Right cardiac atrium (tissue), 5 donors: ENCODE measurements at regions of chr1 and their contacts with region 1.

Region 1: DNA sequence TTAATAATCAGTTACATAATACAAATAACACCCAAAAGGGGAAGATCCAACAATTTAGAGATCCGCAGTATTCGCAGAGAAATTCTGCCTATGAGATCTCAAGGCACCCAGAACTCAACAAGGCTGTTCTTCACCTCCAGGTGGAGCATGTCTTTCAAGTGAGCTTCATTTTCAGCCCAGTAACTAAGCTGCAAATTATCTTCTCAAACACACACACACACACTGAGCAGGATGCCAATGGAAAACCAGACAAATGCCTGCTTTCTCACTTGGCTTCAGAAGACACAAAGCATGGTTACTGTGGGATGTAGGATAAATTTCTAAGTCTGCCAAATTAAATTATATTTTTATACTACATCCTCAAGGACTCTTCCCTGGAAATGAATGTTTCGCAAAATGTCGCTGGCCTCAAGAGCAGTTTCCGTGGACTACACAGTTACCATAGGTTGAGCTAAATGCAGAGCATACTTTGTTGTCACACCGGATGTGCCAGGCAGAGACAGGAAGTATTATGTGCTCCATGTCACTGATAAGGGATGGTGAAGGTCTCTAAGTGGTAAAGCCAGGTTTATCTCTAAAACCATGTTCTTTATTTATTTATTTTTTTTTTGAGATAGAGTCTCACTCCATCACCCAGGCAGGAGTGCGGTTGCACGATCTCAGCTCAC is 30.3 kb downstream of the UBR4 start:
- DNase-seq: no peak
- ATAC-seq: peak in 1 of 2 donors; percentile 31
- H3K4me3 ChIP-seq: no peak overlapping the region
- H3K27ac ChIP-seq: no peak overlapping the region
- H3K4me1 ChIP-seq: no peaks in the 10 kb centered on the region
- H3K27me3 ChIP-seq: no peaks in the 10 kb centered on the region

Region 2: DNA sequence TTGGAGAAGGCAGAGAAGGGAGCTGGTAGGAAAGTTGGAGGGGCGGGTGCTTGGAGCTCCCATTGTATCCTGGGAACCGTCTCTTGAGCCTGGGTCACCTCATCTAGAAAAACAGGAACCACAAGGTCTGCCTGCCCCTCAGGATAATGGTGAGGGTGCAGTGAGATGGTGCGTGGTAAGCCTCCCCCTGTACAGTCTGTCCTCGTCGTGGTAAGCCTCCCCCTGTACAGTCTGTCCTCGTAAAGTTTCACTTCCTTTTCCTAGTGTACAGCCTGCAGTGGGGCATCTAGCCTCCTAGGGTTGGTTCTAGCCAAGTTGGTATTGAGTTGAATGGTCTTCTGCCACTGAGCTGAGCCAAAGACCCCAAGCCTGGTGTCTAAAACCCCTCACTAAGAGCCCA is 1138.6 kb before region 1 on chr1:
- intact Hi-C with region 1: no loop called
- DNase-seq: no peak
- ATAC-seq: peak; percentile 29 to 76
- H3K4me3 ChIP-seq: no peak overlapping the region
- H3K27ac ChIP-seq: no peak overlapping the region
- H3K4me1 ChIP-seq: no peaks in the 10 kb centered on the region
- H3K27me3 ChIP-seq: no peaks in the 10 kb centered on the region

Region 3: GRCh38 chr1:19123837-19124236 is 55.9 kb before region 1 on chr1:
- intact Hi-C with region 1: loop called in 2 of 4 experiments (anchors 10 kb)
- DNase-seq: peak in 1 of 3 donors; percentile 28
- ATAC-seq: peak in 1 of 2 donors; percentile 31
- H3K4me3 ChIP-seq: no peak overlapping the region
- H3K27ac ChIP-seq: no peak overlapping the region
- H3K4me1 ChIP-seq: no peaks in the 10 kb centered on the region
- H3K27me3 ChIP-seq: no peaks in the 10 kb centered on the region

Region 4: DNA sequence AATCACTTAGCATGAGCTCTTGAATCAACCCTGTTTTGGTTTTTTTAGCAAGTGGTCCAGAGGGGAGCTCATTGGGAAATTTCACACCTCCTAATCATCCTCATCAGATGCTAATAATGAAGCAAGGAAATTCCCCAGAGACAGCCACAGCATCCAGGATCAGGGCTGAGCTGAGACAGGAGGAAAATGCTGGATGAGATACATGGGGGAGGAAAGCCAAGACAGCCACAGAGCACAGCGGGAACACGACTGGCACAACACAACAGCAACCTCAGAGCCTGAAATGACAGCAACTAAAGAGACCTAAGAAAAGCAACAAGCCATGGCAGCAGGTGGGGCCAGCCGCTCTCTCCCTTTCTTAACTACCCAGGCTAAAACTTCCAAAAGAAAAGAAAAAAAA is 40.0 kb before region 1 on chr1:
- intact Hi-C with region 1: loop called in 1 of 4 experiments (anchors 10 kb)
- DNase-seq: no peak
- ATAC-seq: no peak
- H3K4me3 ChIP-seq: no peak overlapping the region
- H3K27ac ChIP-seq: no peak overlapping the region
- H3K4me1 ChIP-seq: no peaks in the 10 kb centered on the region
- H3K27me3 ChIP-seq: no peaks in the 10 kb centered on the region

Region 5: GRCh38 chr1:19232526-19232851 is 52.8 kb after region 1 on chr1:
- intact Hi-C with region 1: loop called in 1 of 4 experiments (anchors 10 kb)
- DNase-seq: peak in 2 of 3 donors; percentile 36 to 61
- ATAC-seq: peak; percentile 77 to 81
- H3K4me3 ChIP-seq: no peak overlapping the region
- H3K27ac ChIP-seq: no peak overlapping the region
- H3K4me1 ChIP-seq: no peaks in the 10 kb centered on the region
- H3K27me3 ChIP-seq: no peaks in the 10 kb centered on the region

Region 6: DNA sequence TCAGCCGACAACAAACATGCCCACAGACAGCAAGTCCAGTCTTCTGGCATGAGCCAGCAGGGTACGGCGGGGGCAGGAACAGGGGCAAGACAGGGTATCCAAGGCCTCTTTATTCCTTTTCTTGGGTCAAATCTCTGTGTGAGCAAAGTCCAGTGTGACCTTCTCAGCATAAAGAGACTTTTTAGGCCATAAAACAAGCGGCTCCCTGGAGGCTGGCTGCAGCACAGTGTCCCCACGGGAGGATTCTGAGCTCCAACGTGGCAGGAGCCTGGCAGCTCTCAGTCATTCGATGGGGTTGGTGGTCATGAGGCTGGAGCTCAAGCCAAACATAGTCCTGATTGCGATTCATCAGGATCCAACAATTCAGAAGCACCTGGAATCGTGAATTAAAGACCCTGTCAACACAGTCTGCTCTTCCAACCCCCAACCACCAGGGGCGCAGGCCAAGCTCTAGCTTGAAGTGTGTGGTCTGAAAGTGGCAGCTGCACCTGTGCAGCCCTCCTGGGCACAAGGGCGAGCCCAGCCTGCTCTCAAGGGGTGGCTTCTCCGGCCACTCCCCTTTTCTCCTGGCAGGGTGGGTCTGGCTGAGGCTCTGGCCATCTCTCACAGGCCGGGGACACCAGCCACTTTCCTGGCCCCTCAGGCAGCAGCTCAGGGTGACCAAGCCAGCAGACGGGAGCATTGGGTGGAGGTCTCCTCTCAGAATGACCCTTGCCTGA is 194.5 kb after region 1 on chr1:
- intact Hi-C with region 1: no loop called
- DNase-seq: no peak
- ATAC-seq: no peak
- H3K4me3 ChIP-seq: no peak overlapping the region
- H3K27ac ChIP-seq: no peak overlapping the region
- H3K4me1 ChIP-seq: peaks cover 9% of the 10 kb centered on the region
- H3K27me3 ChIP-seq: no peaks in the 10 kb centered on the region